Ovary (tissue), 10 donors: ENCODE measurements at regions of chr12 and their contacts with region 1.

Region 1: GRCh38 chr12:91538418-91538817 is 355.8 kb upstream of the DCN start:
- DNase-seq: no peak
- H3K4me3 ChIP-seq: no peak overlapping the region
- H3K27ac ChIP-seq: no peak overlapping the region
- H3K4me1 ChIP-seq: no peaks in the 10 kb centered on the region
- H3K27me3 ChIP-seq: no peaks in the 10 kb centered on the region
- CTCF ChIP-seq: no peak
- EP300 ChIP-seq: no peak
- POLR2A ChIP-seq: no peak

Region 2: GRCh38 chr12:91211866-91212265 is 326.6 kb before region 1 on chr12:
- intact Hi-C with region 1: loop called in 1 of 4 experiments (anchors 5 kb)
- DNase-seq: no peak
- H3K4me3 ChIP-seq: no peak overlapping the region
- H3K27ac ChIP-seq: no peak overlapping the region
- H3K4me1 ChIP-seq: no peaks in the 10 kb centered on the region
- H3K27me3 ChIP-seq: no peaks in the 10 kb centered on the region
- CTCF ChIP-seq: no peak
- EP300 ChIP-seq: no peak
- POLR2A ChIP-seq: no peak

Region 3: GRCh38 chr12:91590966-91591638 is 52.7 kb after region 1 on chr12:
- intact Hi-C with region 1: no loop called
- DNase-seq: no peak
- H3K4me3 ChIP-seq: no peak overlapping the region
- H3K27ac ChIP-seq: no peak overlapping the region
- H3K4me1 ChIP-seq: no peaks in the 10 kb centered on the region
- H3K27me3 ChIP-seq: no peaks in the 10 kb centered on the region
- CTCF ChIP-seq: no peak
- EP300 ChIP-seq: no peak
- POLR2A ChIP-seq: no peak